Activated CD4-positive, alpha-beta T cell treated with anti-CD3 and anti-CD28 coated beads for 36 hours (primary cell): ENCODE measurements at regions of chr20 and their contacts with region 1.

Region 1: DNA sequence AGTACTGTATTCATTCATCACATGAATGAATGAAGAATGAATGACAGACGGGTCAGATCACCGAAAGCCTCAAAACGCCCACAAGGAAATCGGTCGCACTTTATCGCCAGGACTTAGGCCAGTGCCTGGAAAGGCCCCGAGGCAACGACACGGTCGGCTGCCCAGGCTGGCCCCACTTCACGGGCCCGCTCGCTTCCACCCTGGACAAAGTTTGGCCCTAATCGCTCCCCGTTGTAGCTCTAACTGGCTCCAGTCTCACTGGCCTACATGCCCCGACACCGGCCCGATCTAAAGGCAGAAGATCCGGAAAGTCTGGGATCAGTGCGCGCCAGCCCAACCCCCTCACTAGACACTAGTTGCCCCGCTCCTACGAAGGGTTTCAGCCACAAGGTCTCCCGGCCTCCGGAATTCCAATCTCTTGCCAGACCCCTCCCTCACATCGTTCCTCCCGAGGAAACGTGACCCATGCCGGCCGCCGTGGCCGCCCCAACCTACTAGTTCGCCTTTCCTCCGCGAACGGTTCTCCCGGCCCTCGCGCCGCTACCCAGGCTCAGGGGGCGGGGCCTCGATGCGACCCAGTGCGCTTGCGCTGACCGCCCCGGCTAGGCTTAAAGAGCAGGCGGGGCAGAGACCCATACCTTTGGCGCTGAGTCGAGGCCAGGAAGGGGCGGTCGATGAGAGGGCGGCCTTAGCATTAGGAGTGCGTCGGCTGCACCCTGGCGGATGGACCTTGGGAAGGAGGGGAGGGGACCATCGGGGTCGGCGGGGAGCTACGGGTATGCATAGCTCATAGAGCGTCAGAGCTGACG is at the starts of genes GSS and MYH7B:
- DNase-seq: peak; percentile 99
- ATAC-seq: peak; percentile 95
- H3K4me3 Mint-ChIP-seq: peak within 1 kb of the TSS; percentile 98
- H3K27ac Mint-ChIP-seq: peak within 1 kb of the TSS; percentile 94
- H3K4me1 Mint-ChIP-seq: peaks cover 16% of the 10 kb centered on the region
- H3K27me3 Mint-ChIP-seq: no peaks in the 10 kb centered on the region
- total RNA-seq, gene GSS: 58.7 to 59.5 TPM
- total RNA-seq, gene MYH7B: 0.23 to 0.40 TPM

Region 2: DNA sequence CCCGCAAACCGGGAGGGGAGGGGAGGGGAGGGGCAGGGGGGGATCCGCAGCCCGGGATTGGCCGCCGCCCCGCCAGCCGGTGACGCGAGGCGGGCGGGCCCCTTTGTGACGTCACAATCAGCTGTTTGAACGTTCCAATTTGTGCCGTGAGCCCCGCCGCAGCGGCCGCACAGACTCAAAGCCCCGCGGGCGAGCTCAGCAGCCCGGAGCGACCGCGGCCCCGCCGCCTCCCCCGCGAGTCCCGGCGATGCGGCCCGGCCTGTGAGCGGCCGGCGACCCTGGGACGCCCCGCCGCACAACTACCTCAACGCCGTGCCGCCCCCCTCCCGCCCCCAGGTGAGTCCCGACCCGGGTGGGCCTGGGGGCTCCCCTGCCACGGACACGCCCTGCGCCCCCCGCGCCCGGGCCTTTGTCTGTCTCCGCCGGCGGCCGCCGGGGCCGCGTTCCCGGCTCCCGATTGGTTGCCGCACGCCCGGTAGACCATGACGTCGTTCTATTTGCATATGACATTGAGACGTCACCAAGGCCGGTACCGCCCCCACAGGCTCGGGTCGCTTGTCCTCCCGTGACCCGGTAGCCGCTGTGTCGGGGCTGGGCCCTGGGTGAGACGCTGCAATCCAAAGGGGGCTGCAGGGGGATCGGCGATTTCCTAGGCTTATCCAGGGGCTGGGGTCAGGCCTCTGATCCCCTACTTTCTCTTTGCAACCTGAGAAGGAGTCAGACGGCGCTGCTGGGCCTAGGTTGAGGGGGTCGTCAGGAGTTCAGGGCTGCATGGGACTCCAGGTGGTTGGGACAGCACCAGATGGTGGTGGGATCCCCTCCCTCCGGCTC is 251.0 kb before region 1 on chr20 and contains the start of gene TP53INP2:
- CTCF ChIA-PET with region 1: no interaction called
- POLR2A ChIA-PET with region 1: no interaction called
- intact Hi-C with region 1: loop called in 1 of 2 experiments (anchors 5 kb)
- DNase-seq: peak; percentile 89
- ATAC-seq: peak; percentile 33
- H3K4me3 Mint-ChIP-seq: peak within 1 kb of the TSS; percentile 82
- H3K27ac Mint-ChIP-seq: peak within 1 kb of the TSS; percentile 63
- H3K4me1 Mint-ChIP-seq: peaks cover 22% of the 10 kb centered on the region
- H3K27me3 Mint-ChIP-seq: peaks cover 10% of the 10 kb centered on the region
- total RNA-seq, gene TP53INP2: 2.2 to 2.3 TPM

Region 3: DNA sequence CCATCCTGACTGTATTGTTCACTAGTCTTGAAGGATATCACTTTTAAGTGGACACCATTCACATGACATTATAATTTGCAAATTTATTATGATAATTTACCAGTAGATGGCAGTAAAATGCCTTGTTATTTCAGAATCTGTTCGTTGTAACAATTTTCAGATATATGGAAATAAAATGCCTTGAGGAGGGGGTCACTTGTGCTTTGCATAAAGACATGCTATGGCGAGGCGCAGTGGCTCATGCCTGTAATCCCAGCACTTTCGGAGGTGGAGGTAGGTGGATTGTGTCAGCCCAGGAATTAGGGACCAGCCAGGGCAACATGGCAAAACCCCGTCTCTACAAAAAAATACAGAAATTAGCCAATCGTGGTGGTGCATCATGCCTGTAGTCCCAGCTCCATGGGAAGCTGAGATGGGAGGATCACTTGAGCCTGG is 121.0 kb before region 1 on chr20:
- CTCF ChIA-PET with region 1: interaction called, 3 read pairs
- POLR2A ChIA-PET with region 1: no interaction called
- intact Hi-C with region 1: loop called in 1 of 2 experiments (anchors 2 kb)
- DNase-seq: no peak
- ATAC-seq: peak; percentile 42
- H3K4me3 Mint-ChIP-seq: no peak overlapping the region
- H3K27ac Mint-ChIP-seq: no peak overlapping the region
- H3K4me1 Mint-ChIP-seq: no peaks in the 10 kb centered on the region
- H3K27me3 Mint-ChIP-seq: peaks cover 8% of the 10 kb centered on the region

Region 4: GRCh38 chr20:35104685-35105295 is 149.4 kb after region 1 on chr20:
- CTCF ChIA-PET with region 1: no interaction called
- POLR2A ChIA-PET with region 1: no interaction called
- intact Hi-C with region 1: no loop called
- DNase-seq: no peak
- ATAC-seq: no peak
- H3K4me3 Mint-ChIP-seq: no peak overlapping the region
- H3K27ac Mint-ChIP-seq: no peak overlapping the region
- H3K4me1 Mint-ChIP-seq: no peaks in the 10 kb centered on the region
- H3K27me3 Mint-ChIP-seq: no peaks in the 10 kb centered on the region

Region 5: DNA sequence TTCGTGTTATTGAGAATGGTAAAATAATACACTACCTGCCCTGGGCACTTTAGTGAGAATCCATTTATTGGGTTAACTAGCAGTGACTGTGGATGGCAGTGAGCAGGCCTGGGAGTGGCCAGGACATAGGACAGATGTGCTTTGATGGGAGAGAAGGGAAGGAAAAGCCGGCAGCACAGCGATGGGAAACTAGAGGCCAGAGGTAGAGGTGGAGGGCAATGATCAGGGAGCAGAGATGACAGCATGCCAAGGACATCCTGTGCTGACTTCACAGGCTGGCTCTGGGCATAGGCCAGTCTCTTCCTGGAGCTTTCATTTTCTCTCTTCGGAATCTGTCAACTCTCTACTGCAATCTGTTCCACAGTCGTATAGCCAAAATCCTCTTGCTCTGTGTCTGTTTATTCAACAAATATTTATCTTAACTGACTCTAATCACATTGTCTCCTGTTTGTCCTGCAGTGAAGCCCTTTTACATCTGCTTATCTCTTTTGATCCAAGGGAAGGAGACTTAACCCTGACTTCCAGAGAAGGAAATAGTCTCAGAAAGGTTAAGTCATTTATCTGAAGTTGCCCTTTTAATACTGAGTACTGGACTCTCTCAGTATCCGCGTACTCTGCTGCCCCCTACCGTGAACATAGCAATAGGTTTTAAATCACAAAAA is 252.6 kb after region 1 on chr20:
- CTCF ChIA-PET with region 1: no interaction called
- POLR2A ChIA-PET with region 1: no interaction called
- intact Hi-C with region 1: loop called in 1 of 2 experiments (anchors 2 kb)
- DNase-seq: peak; percentile 88
- ATAC-seq: peak; percentile 95
- H3K4me3 Mint-ChIP-seq: no peak overlapping the region
- H3K27ac Mint-ChIP-seq: no peak overlapping the region
- H3K4me1 Mint-ChIP-seq: no peaks in the 10 kb centered on the region
- H3K27me3 Mint-ChIP-seq: no peaks in the 10 kb centered on the region

Region 6: DNA sequence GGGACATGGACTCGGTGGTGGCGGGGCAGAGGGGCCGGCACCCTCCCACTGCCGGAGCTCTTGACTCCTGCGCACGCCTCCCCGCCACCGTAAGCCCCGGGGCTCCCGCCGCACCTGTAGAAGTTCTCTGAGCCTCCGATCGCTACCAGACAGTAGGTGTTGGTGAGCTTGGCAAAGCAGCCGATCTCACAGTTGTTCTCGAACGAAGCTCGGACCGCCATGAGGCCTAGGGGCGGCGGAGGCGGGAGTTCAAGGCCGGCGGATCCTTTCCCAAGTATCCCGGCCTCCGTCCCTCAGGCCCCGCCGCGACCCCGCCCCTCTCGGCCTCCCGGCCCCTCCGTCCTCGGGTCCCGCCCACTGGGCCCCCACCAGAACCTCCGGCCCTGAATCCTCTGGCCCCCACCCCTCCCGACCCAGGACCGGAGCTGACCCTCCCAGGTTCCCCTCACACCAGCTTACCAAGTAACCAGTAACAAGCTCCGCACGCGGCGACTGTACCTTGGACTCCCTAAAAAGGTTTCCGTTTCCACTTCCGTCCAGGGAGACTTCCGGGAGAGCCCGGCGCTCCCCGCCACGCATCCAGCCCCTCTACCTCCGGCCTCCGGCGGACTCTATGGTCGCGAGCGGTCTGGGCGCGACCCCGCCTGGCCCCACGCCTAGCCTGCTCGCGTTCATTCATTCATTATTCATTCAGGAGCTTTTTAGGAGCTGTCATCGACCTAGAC is 329.0 kb after region 1 on chr20 and contains the start of gene EIF6:
- CTCF ChIA-PET with region 1: no interaction called
- POLR2A ChIA-PET with region 1: no interaction called
- intact Hi-C with region 1: loop called in 1 of 2 experiments (anchors 1 kb)
- DNase-seq: peak; percentile 88
- ATAC-seq: peak; percentile 85
- H3K4me3 Mint-ChIP-seq: peak within 1 kb of the TSS; percentile 81
- H3K27ac Mint-ChIP-seq: peak within 1 kb of the TSS; percentile 91
- H3K4me1 Mint-ChIP-seq: peaks cover 23% of the 10 kb centered on the region
- H3K27me3 Mint-ChIP-seq: no peaks in the 10 kb centered on the region
- total RNA-seq, gene EIF6: 110 to 124 TPM